Calu3 (cell line): ENCODE measurements at regions of chr15 and their contacts with region 1.

Region 1: DNA sequence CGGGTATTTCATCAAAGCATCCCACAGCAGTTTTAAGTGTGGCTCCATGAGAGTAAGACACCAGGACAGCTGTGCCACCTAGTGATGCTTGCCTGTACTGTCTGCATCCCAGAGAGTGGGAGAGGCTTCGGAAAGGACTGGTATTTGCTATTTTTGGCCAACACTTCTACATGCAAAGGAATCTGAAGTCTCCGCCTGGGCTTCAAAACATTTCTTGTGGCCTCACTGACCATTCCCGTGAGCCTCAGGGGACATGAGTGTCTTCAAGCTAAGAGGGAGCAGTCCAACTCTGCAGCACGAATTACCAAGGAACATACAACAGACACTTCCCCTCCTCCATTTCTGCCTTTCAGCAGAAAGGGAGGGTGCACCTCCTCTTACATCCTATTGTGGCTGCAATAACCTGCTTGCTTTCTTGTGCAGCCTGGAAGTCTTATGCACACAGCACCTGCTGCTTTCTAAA is 177.5 kb downstream of the RORA start:
- DNase-seq: peak; percentile 28
- H3K4me3 Mint-ChIP-seq: no peak overlapping the region
- H3K27ac Mint-ChIP-seq: no peak overlapping the region
- H3K4me1 Mint-ChIP-seq: peaks cover 9% of the 10 kb centered on the region
- H3K27me3 Mint-ChIP-seq: peaks cover 78% of the 10 kb centered on the region
- CTCF ChIP-seq: no peak

Region 2: DNA sequence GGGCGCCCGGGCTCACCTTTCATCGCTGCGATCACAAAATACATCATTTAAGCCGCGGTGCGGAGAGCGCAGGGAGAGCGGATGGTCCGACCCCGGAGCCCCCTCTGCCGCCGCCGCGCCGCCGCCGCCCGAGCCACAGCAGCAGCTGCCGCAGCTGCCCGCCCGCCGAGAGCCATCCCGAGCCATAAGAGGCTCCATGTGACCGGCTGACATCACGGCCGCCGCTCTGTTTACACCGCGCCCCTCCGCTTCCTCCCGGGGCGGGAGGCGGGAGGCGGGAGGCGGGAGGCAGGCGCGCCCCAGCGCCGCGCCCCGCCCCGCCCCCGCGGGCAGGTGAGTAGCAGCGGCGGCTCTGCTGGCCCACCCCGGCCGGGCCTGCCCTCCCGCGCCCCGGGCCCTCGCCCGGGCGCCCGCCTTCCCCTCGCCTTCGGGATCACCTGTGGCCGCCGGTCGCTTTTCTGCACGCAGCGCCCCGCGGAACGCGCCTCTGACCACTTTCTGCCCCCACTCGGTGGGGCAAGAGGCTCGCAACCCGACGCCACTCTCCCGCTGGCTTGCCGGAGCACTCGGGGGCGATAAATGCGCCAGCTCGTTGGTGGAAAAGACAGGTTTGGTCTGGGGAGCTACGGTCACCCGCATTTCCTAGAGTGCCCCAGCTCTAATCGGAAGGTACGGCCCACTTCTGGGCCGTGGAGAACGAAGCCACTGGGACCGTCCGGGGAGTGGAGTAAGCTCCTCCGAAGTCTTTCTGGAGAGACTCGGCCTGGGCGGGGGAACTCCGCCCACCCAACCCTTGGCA is 459.0 kb before region 1 on chr15:
- CTCF ChIA-PET with region 1: interaction called, 3 read pairs
- intact Hi-C with region 1: loop called (anchors 2 kb)
- DNase-seq: peak; percentile 84
- H3K4me3 Mint-ChIP-seq: peak overlapping the region; percentile 82
- H3K27ac Mint-ChIP-seq: peak overlapping the region; percentile 44
- H3K4me1 Mint-ChIP-seq: no peaks in the 10 kb centered on the region
- H3K27me3 Mint-ChIP-seq: peaks cover 72% of the 10 kb centered on the region
- CTCF ChIP-seq: no peak

Region 3: DNA sequence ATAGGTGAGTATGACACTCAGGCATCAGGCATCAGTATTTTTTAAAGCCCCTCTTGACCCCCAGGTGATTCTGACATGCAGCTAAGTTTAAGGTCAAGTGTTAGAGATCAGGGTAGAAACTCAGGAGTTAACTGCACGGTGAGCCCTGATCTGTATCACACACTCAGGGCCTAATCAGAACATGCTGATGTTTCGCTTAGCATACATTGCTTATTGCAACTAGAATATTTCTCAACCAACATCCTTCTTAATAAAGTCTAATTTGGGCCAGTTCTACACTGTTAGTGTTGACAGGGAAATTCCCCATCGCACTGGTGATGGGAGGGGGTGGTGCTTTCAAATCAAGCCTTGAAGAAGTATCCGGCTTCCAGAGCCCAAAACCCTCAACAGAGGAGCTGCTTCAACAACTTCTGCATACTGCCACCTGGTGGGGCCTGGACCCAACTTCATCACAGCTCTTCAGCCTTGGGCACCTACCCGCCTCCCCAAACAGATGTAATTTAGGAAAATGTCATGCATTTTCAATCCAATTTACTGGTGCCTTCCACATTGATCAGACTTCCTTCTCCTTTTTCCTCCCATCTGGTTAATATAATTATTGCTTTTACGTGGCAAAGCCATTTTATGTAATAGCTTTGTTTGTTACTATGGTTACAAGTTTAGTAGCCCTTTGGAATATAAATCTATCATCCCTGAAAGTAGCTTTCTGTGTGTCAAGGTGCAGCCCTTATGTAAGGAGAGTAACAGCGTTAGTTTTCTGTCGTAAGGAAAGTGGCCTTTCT is 134.7 kb before region 1 on chr15:
- CTCF ChIA-PET with region 1: no interaction called
- intact Hi-C with region 1: loop called (anchors 2 kb)
- DNase-seq: peak; percentile 88
- H3K4me3 Mint-ChIP-seq: peak overlapping the region; percentile 37
- H3K27ac Mint-ChIP-seq: peak overlapping the region; percentile 88
- H3K4me1 Mint-ChIP-seq: peaks cover 34% of the 10 kb centered on the region
- H3K27me3 Mint-ChIP-seq: no peaks in the 10 kb centered on the region
- CTCF ChIP-seq: peak; percentile 84